ENCODE measurements at regions of chr12 and their contacts with region 1.

Region 1: DNA sequence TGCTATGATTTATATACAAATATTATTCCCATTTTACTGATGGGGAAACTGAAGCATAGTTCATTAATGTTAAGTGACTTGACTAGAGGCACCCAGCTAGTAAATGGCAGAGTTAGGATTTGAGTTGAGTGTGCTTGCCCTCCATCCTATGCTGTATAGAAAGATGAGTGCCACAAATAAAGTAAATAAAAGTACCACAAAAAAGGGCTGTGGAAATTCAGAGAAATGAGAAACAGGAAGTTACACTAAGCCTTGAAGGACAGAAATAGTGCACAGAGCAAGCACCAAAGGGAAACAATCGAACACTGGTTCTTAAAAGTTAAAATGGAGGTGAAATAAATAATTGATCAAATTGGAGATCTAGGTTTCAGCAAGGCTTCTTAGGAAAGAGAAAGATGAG is 9.2 kb upstream of the ABCD2 start:
- DNase-seq: peak in 7 of 9 donors; percentile 13 to 74 (median 60)
- ATAC-seq: peak; percentile 86
- H3K4me3 ChIP-seq: peak overlapping the region; percentile 21
- H3K4me3 Mint-ChIP-seq: peak overlapping the region; percentile 27 to 83 (median 68)
- H3K27ac ChIP-seq: peak overlapping the region; percentile 46
- H3K27ac Mint-ChIP-seq: peak overlapping the region; percentile 78 to 92 (median 87)
- H3K4me1 ChIP-seq: peaks cover 27 to 48% of the 10 kb centered on the region in 2 donors
- H3K4me1 Mint-ChIP-seq: peaks cover 21 to 61% (median 54%) of the 10 kb centered on the region in 7 donors
- H3K27me3 ChIP-seq: no peaks in the 10 kb centered on the region
- H3K27me3 Mint-ChIP-seq: no peaks in the 10 kb centered on the region

Region 2: GRCh38 chr12:39638840-39639239 is 10.0 kb after region 1 on chr12:
- CTCF ChIA-PET with region 1: no interaction called
- POLR2A ChIA-PET with region 1: interaction called, 3 read pairs
- intact Hi-C with region 1: loop called in 1 of 2 experiments (anchors 1 kb)
- DNase-seq: no peak
- ATAC-seq: no peak
- H3K4me3 ChIP-seq: no peak overlapping the region
- H3K4me3 Mint-ChIP-seq: no peak overlapping the region
- H3K27ac ChIP-seq: no peak overlapping the region
- H3K27ac Mint-ChIP-seq: no peak overlapping the region
- H3K4me1 ChIP-seq: no peaks in the 10 kb centered on the region
- H3K4me1 Mint-ChIP-seq: peaks cover 0 to 7% (median 0%) of the 10 kb centered on the region in 7 donors
- H3K27me3 ChIP-seq: no peaks in the 10 kb centered on the region
- H3K27me3 Mint-ChIP-seq: peaks cover 0 to 4% (median 0%) of the 10 kb centered on the region in 5 donors

Region 3: GRCh38 chr12:39646963-39647362 is 18.1 kb after region 1 on chr12:
- CTCF ChIA-PET with region 1: no interaction called
- POLR2A ChIA-PET with region 1: interaction called, 6 read pairs
- intact Hi-C with region 1: loop called in 1 of 2 experiments (anchors 1 kb)
- DNase-seq: no peak
- ATAC-seq: no peak
- H3K4me3 ChIP-seq: no peak overlapping the region
- H3K4me3 Mint-ChIP-seq: no peak overlapping the region
- H3K27ac ChIP-seq: no peak overlapping the region
- H3K27ac Mint-ChIP-seq: no peak overlapping the region
- H3K4me1 ChIP-seq: no peaks in the 10 kb centered on the region
- H3K4me1 Mint-ChIP-seq: peaks cover 0 to 24% (median 14%) of the 10 kb centered on the region in 7 donors
- H3K27me3 ChIP-seq: no peaks in the 10 kb centered on the region
- H3K27me3 Mint-ChIP-seq: peaks cover 0 to 2% (median 0%) of the 10 kb centered on the region in 5 donors

Region 4: GRCh38 chr12:39682689-39683477 is 54.0 kb after region 1 on chr12:
- CTCF ChIA-PET with region 1: no interaction called
- POLR2A ChIA-PET with region 1: interaction called, 3 read pairs
- intact Hi-C with region 1: loop called in 1 of 2 experiments (anchors 2 kb)
- DNase-seq: peak in 6 of 9 donors; percentile 27 to 60 (median 44)
- ATAC-seq: peak; percentile 75
- H3K4me3 ChIP-seq: peak overlapping the region; percentile 30
- H3K4me3 Mint-ChIP-seq: peak overlapping the region; percentile 61 to 90 (median 83)
- H3K27ac ChIP-seq: peak overlapping the region; percentile 64
- H3K27ac Mint-ChIP-seq: peak overlapping the region; percentile 87 to 99 (median 96)
- H3K4me1 ChIP-seq: peaks cover 24 to 26% of the 10 kb centered on the region in 2 donors
- H3K4me1 Mint-ChIP-seq: peaks cover 16 to 45% (median 38%) of the 10 kb centered on the region in 7 donors
- H3K27me3 ChIP-seq: no peaks in the 10 kb centered on the region
- H3K27me3 Mint-ChIP-seq: no peaks in the 10 kb centered on the region

Region 5: GRCh38 chr12:39764944-39765560 is 136.2 kb after region 1 on chr12:
- CTCF ChIA-PET with region 1: no interaction called
- POLR2A ChIA-PET with region 1: no interaction called
- intact Hi-C with region 1: no loop called
- DNase-seq: peak in 4 of 9 donors; percentile 2 to 22 (median 8)
- ATAC-seq: peak; percentile 51
- H3K4me3 ChIP-seq: no peak overlapping the region
- H3K4me3 Mint-ChIP-seq: no peak overlapping the region
- H3K27ac ChIP-seq: no peak overlapping the region
- H3K27ac Mint-ChIP-seq: no peak overlapping the region
- H3K4me1 ChIP-seq: no peaks in the 10 kb centered on the region
- H3K4me1 Mint-ChIP-seq: no peaks in the 10 kb centered on the region
- H3K27me3 ChIP-seq: no peaks in the 10 kb centered on the region
- H3K27me3 Mint-ChIP-seq: no peaks in the 10 kb centered on the region

Measured in naive thymus-derived CD4-positive, alpha-beta T cell (primary cell).